ENCODE measurements at regions of chr3 and their contacts with region 1.

Region 1: GRCh38 chr3:39378088-39378487 is 5.1 kb upstream of the SLC25A38 start:
- DNase-seq: peak; percentile 73
- H3K4me3 Mint-ChIP-seq: no peak overlapping the region
- H3K27ac Mint-ChIP-seq: no peak overlapping the region
- H3K4me1 Mint-ChIP-seq: peaks cover 25% of the 10 kb centered on the region
- H3K27me3 Mint-ChIP-seq: no peaks in the 10 kb centered on the region

Region 2: DNA sequence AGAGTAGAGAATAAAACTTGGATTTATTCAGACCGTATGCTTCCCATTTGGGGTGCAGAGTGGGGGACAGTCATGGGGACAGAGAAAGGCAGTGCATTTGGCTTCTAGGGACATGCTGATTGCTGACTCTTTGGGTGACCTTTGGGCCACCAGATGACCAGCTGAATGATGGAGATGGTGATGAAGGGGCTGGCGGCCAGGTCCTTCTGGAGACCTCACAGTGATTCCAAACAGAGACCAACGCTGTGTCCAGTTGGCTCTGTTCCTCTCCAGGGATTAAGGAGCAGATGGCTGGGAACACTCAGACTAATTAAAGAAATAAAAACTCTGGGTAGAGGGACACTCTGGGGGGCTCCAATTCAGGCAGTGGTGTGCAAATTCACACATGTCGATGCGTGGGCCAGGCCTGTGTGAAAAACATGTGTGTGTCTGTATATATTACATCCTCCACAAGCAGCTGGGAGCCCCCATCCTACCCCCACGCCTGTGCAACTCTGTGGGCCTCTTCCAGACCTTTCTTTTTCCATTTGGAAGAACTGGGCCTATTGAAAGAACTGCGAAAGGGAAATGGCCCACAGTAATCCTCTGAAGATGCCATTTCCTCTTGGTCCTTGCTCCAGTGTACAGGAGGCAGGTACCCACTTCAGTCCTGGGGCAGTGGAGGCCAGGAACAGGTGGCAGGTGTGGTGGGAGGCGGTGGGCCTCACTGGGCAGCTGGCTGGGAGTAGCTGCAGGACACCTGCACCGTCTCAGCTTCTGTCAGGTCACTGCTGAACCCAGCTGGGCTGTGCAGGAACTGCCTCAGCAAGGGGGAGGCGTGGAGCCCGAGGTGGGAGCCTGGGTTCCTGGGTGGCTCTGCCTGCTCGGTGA is 194.6 kb before region 1 on chr3:
- CTCF ChIA-PET with region 1: no interaction called
- POLR2A ChIA-PET with region 1: no interaction called
- DNase-seq: no peak
- H3K4me3 Mint-ChIP-seq: no peak overlapping the region
- H3K27ac Mint-ChIP-seq: no peak overlapping the region
- H3K4me1 Mint-ChIP-seq: peaks cover 28% of the 10 kb centered on the region
- H3K27me3 Mint-ChIP-seq: no peaks in the 10 kb centered on the region

Region 3: GRCh38 chr3:39279745-39280517 is 98.2 kb before region 1 on chr3 and contains the start of gene CX3CR1:
- CTCF ChIA-PET with region 1: no interaction called
- POLR2A ChIA-PET with region 1: no interaction called
- DNase-seq: no peak
- H3K4me3 Mint-ChIP-seq: peak within 1 kb of the TSS; percentile 50
- H3K27ac Mint-ChIP-seq: no peak within 1 kb of the TSS
- H3K4me1 Mint-ChIP-seq: peaks cover 86% of the 10 kb centered on the region
- H3K27me3 Mint-ChIP-seq: peaks cover 11% of the 10 kb centered on the region
- total RNA-seq, gene CX3CR1: 5.5 to 6.2 TPM

Region 4: DNA sequence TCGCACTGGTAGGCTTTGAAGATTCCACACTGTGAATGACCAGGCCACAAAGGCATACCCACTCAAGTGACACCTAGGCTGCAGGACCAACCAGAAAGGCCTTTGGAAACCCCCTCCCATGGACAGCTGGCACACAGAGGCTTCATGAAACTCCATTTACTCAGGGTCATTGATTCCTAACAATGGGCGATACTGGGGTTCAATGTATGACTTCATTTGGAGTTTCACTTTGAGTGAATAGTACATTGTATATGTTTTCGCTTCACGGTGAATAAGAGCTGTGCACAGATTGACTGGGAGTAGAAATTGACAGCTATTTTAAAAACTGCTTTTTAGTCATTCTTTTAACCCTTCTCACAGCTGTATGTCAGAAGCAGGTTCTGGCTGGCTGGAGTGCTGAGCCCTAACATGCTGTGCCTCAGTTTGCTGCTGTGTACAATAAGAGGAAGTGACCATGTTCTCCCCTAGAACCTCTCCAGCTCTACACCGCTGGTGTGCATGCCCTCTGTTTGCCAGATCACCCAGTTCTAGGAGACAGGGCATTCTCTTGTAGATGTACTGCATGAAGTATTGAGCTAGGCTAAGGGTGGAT is 82.8 kb before region 1 on chr3:
- CTCF ChIA-PET with region 1: interaction called, 217 read pairs
- POLR2A ChIA-PET with region 1: interaction called, 6 read pairs
- DNase-seq: no peak
- H3K4me3 Mint-ChIP-seq: no peak overlapping the region
- H3K27ac Mint-ChIP-seq: no peak overlapping the region
- H3K4me1 Mint-ChIP-seq: peaks cover 39% of the 10 kb centered on the region
- H3K27me3 Mint-ChIP-seq: peaks cover 18% of the 10 kb centered on the region

Region 5: GRCh38 chr3:40009991-40010390 is 631.9 kb after region 1 on chr3:
- CTCF ChIA-PET with region 1: no interaction called
- POLR2A ChIA-PET with region 1: no interaction called
- DNase-seq: no peak
- H3K4me3 Mint-ChIP-seq: no peak overlapping the region
- H3K27ac Mint-ChIP-seq: no peak overlapping the region
- H3K4me1 Mint-ChIP-seq: no peaks in the 10 kb centered on the region
- H3K27me3 Mint-ChIP-seq: peaks cover 2% of the 10 kb centered on the region